ENCODE measurements at regions of chr7 and their contacts with region 1.

Region 1: DNA sequence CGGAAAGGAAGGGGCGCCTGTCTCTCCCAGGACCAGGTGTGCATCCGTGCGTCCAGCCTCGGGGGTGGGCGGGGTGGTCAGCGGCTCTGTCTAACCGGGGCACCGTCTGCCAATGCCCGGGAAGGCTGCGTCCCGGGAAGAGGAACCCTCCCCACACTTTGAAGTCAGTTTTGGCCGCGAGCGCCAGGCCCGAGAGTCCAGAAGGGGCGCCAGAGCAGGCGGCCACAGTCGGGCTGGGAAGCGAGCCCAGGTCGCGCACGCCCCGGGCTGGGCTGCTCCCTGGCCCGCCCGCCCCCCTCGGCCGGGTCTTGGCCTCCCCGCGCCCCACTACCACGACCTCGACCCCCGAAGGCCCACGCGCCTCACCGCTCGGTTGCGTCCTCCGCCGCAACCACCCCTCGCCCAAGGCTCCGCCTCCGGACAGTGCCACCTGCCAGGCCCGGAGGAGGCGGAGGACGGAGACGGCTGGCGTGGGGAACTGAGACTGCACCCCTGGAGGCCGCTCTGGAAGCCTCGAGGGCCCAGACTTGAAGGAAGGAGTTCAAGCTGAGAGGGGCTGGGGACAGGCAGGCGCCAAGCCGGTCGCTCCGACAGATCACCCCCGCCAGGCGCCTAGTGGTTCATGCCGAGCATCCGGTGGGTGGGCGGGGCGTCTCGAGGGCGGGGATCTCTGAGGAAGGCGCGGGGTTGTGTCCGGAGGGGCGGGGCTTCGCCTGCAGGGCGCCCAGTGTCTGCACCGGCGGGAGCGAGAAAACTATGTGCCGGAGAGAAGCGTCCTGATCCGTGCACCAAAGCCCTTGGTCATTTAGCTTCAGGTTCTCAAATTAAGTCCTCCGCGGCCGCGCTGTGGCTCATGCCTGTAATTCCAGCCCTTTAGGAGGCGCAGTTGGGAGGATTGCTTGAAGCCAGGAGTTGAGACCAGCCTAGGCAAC is at the start of gene BRAT1:
- DNase-seq: peak; percentile 92
- H3K4me3 Mint-ChIP-seq: peak within 1 kb of the TSS; percentile 89
- H3K27ac Mint-ChIP-seq: peak within 1 kb of the TSS; percentile 84
- H3K4me1 Mint-ChIP-seq: peaks cover 28% of the 10 kb centered on the region
- H3K27me3 Mint-ChIP-seq: no peaks in the 10 kb centered on the region
- total RNA-seq, gene BRAT1: 39.9 and 41.9 TPM in 2 replicates

Region 2: DNA sequence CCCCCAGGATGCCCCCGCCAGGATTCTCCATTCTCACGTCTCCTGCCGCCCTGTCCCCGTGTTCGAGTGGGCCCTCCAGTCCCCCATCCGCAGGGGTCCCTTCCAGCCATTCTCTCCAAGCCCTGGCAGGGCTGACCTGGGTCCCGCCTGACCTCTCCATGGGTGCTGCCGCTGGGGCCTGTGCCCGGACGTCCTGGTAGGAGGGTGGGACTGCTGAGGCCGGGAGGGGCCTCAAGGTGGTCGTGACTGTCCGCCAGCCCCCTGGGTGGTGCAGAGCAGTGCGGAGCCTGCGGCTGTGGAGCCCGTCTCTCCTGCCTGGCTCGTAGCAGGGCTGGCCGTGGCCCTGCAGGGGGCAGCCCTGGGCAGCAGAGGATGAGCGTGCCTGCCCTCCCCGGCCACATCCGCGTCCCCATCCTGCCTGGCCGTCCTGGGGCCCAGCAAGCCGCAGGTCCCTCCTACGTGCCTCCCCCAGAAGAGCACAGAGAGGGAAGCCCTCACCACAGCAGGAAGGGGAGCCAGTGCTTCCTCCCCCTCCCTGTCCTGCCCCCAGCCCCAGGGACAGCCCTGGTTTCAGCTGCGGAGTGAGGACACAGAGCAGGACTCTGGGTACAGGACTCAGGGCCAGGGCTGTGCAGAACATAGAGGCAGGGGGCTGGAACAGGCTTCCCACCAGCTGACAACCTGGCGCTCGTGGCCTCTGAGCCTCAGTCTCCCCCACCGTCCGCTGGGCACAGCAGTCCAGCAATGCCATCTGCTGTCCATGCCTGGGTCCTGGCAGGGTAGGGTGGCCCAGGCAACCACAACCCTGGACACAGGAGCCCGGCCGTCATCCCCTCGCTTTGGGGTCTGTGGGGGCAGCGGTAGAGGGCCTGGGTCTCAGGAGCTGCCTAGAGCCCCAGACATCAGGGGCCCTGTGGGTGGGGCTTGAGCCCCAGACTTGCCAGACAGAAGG is 77.7 kb before region 1 on chr7:
- intact Hi-C with region 1: loop called (anchors 2 kb)
- DNase-seq: peak; percentile 57
- H3K4me3 Mint-ChIP-seq: no peak overlapping the region
- H3K27ac Mint-ChIP-seq: no peak overlapping the region
- H3K4me1 Mint-ChIP-seq: peaks cover 2% of the 10 kb centered on the region
- H3K27me3 Mint-ChIP-seq: peaks cover 3% of the 10 kb centered on the region

Region 3: GRCh38 chr7:2495418-2496299 is 59.7 kb before region 1 on chr7:
- intact Hi-C with region 1: no loop called
- DNase-seq: no peak
- H3K4me3 Mint-ChIP-seq: no peak overlapping the region
- H3K27ac Mint-ChIP-seq: no peak overlapping the region
- H3K4me1 Mint-ChIP-seq: no peaks in the 10 kb centered on the region
- H3K27me3 Mint-ChIP-seq: peaks cover 5% of the 10 kb centered on the region

Region 4: GRCh38 chr7:2519119-2519930 is 36.1 kb before region 1 on chr7 and contains the start of gene LFNG:
- intact Hi-C with region 1: loop called (anchors 1 kb)
- DNase-seq: peak; percentile 82
- H3K4me3 Mint-ChIP-seq: peak within 1 kb of the TSS; percentile 98
- H3K27ac Mint-ChIP-seq: peak within 1 kb of the TSS; percentile 79
- H3K4me1 Mint-ChIP-seq: peaks cover 27% of the 10 kb centered on the region
- H3K27me3 Mint-ChIP-seq: peaks cover 3% of the 10 kb centered on the region
- total RNA-seq, gene LFNG: 41.0 and 45.6 TPM in 2 replicates

Region 5: DNA sequence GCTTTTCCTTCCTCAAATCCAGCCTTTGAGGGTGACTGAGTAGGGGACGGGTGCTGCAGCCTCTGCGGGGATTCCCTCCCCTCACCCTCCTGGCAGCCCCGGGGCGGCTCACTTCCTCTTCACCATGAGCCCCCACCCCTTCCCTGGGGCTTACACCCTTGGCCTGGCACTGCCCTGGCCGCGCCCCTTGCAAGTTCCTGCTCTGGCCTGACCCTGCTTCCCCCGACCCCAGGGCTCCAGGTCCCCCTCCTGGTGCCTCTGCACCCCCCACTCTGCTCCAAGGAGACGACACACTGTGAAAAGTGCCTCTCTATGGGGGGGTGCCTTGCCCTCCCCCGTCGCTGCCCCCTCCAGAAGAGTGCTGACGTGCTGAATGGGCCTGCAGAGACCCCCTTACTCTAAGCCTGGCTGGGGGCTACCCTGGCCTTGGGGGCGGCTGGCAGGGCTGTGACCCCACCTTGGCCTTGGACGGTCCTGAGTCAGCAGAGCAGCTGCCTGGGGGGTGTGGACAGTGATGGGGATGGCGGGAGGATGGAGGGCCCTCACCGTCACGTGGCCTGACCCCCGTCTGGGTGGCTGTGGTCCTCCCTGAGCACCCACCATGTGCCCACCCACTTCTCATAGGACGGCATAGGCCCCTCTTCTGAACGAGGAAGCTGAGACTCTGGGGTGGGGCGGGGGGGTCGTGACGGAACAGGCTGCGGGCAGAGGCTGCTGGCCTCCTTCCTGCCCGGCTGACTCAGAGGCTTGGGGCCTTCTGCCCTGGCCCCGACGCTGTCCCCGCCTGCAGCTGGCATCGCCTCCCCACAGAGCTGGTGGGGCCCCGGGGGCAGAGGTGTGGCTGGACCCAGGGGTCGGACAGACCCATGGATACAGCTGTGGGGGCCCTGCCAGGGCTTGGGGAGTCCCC is 26.0 kb before region 1 on chr7:
- intact Hi-C with region 1: loop called (anchors 2 kb)
- DNase-seq: peak; percentile 38
- H3K4me3 Mint-ChIP-seq: peak overlapping the region; percentile 72
- H3K27ac Mint-ChIP-seq: peak overlapping the region; percentile 97
- H3K4me1 Mint-ChIP-seq: peaks cover 34% of the 10 kb centered on the region
- H3K27me3 Mint-ChIP-seq: no peaks in the 10 kb centered on the region

Region 6: GRCh38 chr7:2632733-2633537 is 77.5 kb after region 1 on chr7:
- intact Hi-C with region 1: loop called (anchors 5 kb)
- DNase-seq: peak; percentile 37
- H3K4me3 Mint-ChIP-seq: peak overlapping the region; percentile 97
- H3K27ac Mint-ChIP-seq: peak overlapping the region; percentile 93
- H3K4me1 Mint-ChIP-seq: peaks cover 13% of the 10 kb centered on the region
- H3K27me3 Mint-ChIP-seq: no peaks in the 10 kb centered on the region

Measured in activated T-helper 2 cell treated with anti-CD3 and anti-CD28 coated beads, Interferon-gamma antibody, Interleukin-2, Interleukin-4, amounts not matched to agents 10 μg/mL and 5 μg/mL and 100 μg/mL, durations not matched to agents 14 hours and 24 hours and 36 hours (primary cell).